H1 (cell line): ENCODE measurements at regions of chr11 and their contacts with region 1.

Region 1: GRCh38 chr11:120303004-120303637 is 22.0 kb upstream of the TLCD5 start:
- DNase-seq: peak; percentile 64 to 87
- H3K4me3 ChIP-seq: no peak overlapping the region
- H3K27ac ChIP-seq: no peak overlapping the region
- H3K4me1 ChIP-seq: peaks cover 0 to 14% (median 8%) of the 10 kb centered on the region in 4 experiments; a peak in 6 of 7 replicates
- H3K27me3 ChIP-seq: peaks cover 0 to 4% (median 0%) of the 10 kb centered on the region in 4 experiments; a peak in 2 of 7 replicates
- CTCF ChIP-seq: peak; percentile 96 to 100 (median 100)
- EP300 ChIP-seq: no peak
- POLR2A ChIP-seq: no peak
- RAD21 ChIP-seq: peak; percentile 87 to 92

Region 2: DNA sequence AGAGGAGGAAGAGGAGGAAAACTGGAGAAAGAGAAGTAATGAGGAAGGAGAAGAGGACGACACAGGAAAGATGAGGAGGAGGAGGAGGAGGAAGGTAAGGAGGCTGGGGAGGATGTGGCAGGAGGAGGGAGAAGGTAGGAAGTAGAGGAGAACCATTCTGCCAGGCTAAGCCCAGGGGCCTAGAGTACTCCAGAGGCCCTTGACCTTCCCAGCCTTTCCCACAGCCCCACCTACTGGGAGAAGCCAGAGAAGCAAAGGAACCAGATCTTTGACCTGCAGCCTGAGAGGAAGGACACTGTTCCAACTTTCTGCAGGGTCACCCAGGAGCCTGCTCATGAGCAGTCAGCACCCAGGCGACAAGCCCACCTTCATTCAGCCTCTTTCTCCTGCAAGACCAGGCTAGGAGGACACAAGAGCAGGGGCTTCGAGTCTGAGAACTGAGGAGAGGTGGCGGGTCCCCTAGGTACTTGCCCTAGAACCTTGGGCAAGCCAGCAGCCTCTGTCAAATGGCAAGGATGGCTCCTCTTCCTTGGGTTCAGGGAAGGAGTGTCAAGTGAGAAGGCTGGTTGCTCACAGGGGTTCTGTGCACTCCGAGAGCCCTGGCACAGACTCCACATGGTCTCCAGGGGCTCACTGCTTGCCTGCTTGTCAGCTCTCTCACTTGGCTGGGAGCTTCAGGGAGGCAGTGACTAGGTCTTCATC is 120.2 kb before region 1 on chr11:
- CTCF ChIA-PET with region 1: interaction called, 11 read pairs
- POLR2A ChIA-PET with region 1: no interaction called
- DNase-seq: peak in 1 of 2 experiments; percentile 76
- H3K4me3 ChIP-seq: no peak overlapping the region
- H3K27ac ChIP-seq: no peak overlapping the region
- H3K4me1 ChIP-seq: peaks cover 1 to 14% (median 4%) of the 10 kb centered on the region in 4 experiments; a peak in 4 of 7 replicates
- H3K27me3 ChIP-seq: peaks cover 0 to 28% (median 21%) of the 10 kb centered on the region in 4 experiments; a peak in 4 of 7 replicates
- CTCF ChIP-seq: peak; percentile 58 to 83 (median 64)
- EP300 ChIP-seq: no peak
- POLR2A ChIP-seq: no peak
- RAD21 ChIP-seq: peak; percentile 49 to 64

Region 3: DNA sequence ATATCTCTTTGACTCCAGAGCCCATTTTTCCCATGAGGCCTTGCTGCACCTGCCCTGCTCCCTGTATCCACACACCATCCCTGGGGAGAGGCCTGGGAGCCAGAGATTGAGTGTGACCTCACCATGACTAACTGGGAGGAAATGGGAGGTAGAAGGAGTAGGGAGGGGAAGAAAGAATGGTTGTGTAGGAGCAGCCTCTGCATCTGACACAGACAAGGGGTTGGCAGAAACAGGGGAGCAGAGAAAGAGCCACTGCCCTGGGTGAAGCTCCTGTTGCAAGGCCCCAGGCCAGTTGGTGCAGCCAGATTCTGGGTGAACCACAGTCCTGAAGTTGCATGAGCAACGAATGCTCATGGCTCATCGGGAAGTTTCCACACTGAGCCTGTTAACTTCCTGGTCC is 30.8 kb before region 1 on chr11:
- CTCF ChIA-PET with region 1: interaction called, 22 read pairs
- POLR2A ChIA-PET with region 1: no interaction called
- DNase-seq: no peak
- H3K4me3 ChIP-seq: no peak overlapping the region
- H3K27ac ChIP-seq: no peak overlapping the region
- H3K4me1 ChIP-seq: no peaks in the 10 kb centered on the region
- H3K27me3 ChIP-seq: no peaks in the 10 kb centered on the region
- CTCF ChIP-seq: no peak
- EP300 ChIP-seq: no peak
- POLR2A ChIP-seq: no peak
- RAD21 ChIP-seq: no peak

Region 4: GRCh38 chr11:120281143-120281795 is 21.9 kb before region 1 on chr11:
- CTCF ChIA-PET with region 1: interaction called, 76 read pairs
- POLR2A ChIA-PET with region 1: no interaction called
- DNase-seq: no peak
- H3K4me3 ChIP-seq: no peak overlapping the region
- H3K27ac ChIP-seq: no peak overlapping the region
- H3K4me1 ChIP-seq: peaks cover 0 to 5% (median 0%) of the 10 kb centered on the region in 4 experiments; a peak in 3 of 7 replicates
- H3K27me3 ChIP-seq: peaks cover 0 to 2% (median 0%) of the 10 kb centered on the region in 4 experiments; a peak in 1 of 7 replicates
- CTCF ChIP-seq: no peak
- EP300 ChIP-seq: no peak
- POLR2A ChIP-seq: no peak
- RAD21 ChIP-seq: no peak

Region 5: DNA sequence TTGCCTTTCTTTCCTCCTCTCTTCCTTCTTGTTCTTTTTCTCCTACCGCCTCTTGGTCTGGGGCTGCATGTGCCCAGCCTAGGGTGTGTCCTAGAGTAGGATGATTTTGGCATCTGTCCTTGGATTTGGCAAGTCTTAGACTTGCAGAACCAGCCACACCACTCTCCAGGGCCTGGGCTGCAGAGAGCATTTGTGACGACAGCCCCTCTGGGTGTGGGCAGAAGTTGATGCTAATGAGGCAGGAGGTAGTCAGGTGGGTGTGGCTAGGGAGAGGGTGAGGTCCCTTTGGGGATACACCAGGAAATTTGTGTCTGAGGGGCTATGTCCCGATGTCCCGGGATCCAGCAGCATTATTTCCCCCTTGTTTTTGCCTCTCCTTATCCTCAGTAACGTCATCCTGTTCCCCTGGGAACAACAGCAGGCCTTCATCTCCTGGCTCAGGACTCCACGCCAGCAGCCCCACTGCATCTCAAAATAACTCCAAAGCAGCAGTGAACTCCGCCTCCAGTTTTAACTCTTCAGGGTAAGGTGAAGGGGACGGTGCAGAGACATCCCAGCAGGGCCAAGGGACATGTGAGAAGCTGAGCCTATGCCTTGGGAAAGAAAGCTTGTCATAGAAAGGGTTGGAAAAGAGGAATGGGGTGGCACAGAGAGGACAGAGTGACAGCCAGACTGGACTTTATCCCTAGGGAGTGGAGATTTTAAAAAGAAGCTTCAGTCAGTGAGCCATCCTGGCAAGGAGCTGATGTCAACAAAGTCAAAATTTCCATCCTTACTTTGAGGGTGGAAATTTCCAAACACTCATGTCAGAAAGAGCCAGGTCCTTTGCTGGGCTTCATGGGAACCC is 13.9 kb after region 1 on chr11:
- CTCF ChIA-PET with region 1: interaction called, 89 read pairs
- POLR2A ChIA-PET with region 1: no interaction called
- DNase-seq: no peak
- H3K4me3 ChIP-seq: peak overlapping the region in 3 of 4 experiments; percentile 7 to 40 (median 15); a peak in 4 of 8 replicates
- H3K27ac ChIP-seq: no peak overlapping the region; the same call in 1 of the 2 replicates
- H3K4me1 ChIP-seq: peaks cover 0 to 7% (median 6%) of the 10 kb centered on the region in 4 experiments
- H3K27me3 ChIP-seq: no peaks in the 10 kb centered on the region
- CTCF ChIP-seq: no peak
- EP300 ChIP-seq: no peak
- POLR2A ChIP-seq: no peak; a peak in 1 of 3 replicates
- RAD21 ChIP-seq: no peak

Region 6: GRCh38 chr11:120400564-120401364 is 97.6 kb after region 1 on chr11:
- CTCF ChIA-PET with region 1: no interaction called
- POLR2A ChIA-PET with region 1: no interaction called
- DNase-seq: no peak
- H3K4me3 ChIP-seq: no peak overlapping the region
- H3K27ac ChIP-seq: no peak overlapping the region
- H3K4me1 ChIP-seq: peaks cover 0 to 10% (median 4%) of the 10 kb centered on the region in 4 experiments; a peak in 4 of 7 replicates
- H3K27me3 ChIP-seq: no peaks in the 10 kb centered on the region
- CTCF ChIP-seq: no peak
- EP300 ChIP-seq: no peak
- POLR2A ChIP-seq: no peak
- RAD21 ChIP-seq: no peak

Region 7: GRCh38 chr11:120420572-120420971 is 117.5 kb after region 1 on chr11:
- CTCF ChIA-PET with region 1: no interaction called
- POLR2A ChIA-PET with region 1: no interaction called
- DNase-seq: no peak
- H3K4me3 ChIP-seq: no peak overlapping the region
- H3K27ac ChIP-seq: no peak overlapping the region
- H3K4me1 ChIP-seq: no peaks in the 10 kb centered on the region
- H3K27me3 ChIP-seq: no peaks in the 10 kb centered on the region
- CTCF ChIP-seq: no peak
- EP300 ChIP-seq: no peak
- POLR2A ChIP-seq: no peak
- RAD21 ChIP-seq: no peak

Region 8: GRCh38 chr11:120547811-120548681 is 244.9 kb after region 1 on chr11:
- CTCF ChIA-PET with region 1: no interaction called
- POLR2A ChIA-PET with region 1: no interaction called
- DNase-seq: no peak
- H3K4me3 ChIP-seq: no peak overlapping the region
- H3K27ac ChIP-seq: no peak overlapping the region
- H3K4me1 ChIP-seq: peaks cover 4 to 23% (median 12%) of the 10 kb centered on the region in 4 experiments
- H3K27me3 ChIP-seq: no peaks in the 10 kb centered on the region; a peak in 1 of 7 replicates
- CTCF ChIP-seq: peak in 2 of 3 experiments; percentile 21 to 43; a peak in 3 of 4 replicates
- EP300 ChIP-seq: no peak
- POLR2A ChIP-seq: no peak
- RAD21 ChIP-seq: peak in 1 of 2 experiments; percentile 42; a peak in 1 of 4 replicates